ENCODE measurements at regions of chr22 and their contacts with region 1.

Region 1: DNA sequence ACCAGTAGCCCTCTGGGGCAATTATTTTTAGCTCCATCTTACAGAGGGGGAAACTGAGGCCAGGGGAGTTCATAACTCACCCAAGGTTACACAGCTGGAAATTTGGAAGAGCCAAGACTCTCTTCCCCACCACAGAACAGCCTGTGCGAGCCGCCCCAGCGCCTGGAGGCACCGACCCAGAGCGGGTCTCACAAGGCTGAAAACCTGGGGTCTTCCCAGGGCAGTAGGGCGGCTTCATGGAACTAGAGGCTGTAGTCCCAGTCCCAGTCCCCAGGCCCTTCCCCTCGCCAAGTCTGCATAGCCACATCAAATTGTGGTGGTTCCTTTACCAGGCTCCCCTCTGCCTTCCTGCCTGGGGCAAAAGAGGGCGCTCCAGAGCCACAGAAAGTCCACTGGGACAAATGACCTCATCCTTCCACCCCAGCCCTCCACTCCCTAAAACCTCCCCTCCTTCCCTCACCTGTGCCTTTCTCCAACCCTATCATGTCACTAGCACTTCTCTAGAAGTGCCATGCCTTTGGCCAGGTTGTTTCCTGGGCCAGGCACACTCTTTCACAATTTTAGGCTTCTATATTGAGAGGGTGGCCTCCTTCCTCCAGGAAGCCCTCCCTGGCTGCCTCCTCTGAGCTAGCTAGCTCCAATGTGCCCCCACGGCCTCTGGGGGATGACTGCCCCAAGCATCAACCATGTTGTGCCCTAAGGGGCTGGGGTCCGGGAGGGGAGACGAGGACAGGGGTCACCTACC is 15.2 kb upstream of the CDC42EP1 start:
- DNase-seq: peak; percentile 80
- H3K4me3 ChIP-seq: no peak overlapping the region
- H3K27ac ChIP-seq: peak overlapping the region; percentile 66
- H3K4me1 ChIP-seq: peaks cover 51% of the 10 kb centered on the region
- H3K27me3 ChIP-seq: no peaks in the 10 kb centered on the region
- CTCF ChIP-seq: peak; percentile 79 to 83

Region 2: DNA sequence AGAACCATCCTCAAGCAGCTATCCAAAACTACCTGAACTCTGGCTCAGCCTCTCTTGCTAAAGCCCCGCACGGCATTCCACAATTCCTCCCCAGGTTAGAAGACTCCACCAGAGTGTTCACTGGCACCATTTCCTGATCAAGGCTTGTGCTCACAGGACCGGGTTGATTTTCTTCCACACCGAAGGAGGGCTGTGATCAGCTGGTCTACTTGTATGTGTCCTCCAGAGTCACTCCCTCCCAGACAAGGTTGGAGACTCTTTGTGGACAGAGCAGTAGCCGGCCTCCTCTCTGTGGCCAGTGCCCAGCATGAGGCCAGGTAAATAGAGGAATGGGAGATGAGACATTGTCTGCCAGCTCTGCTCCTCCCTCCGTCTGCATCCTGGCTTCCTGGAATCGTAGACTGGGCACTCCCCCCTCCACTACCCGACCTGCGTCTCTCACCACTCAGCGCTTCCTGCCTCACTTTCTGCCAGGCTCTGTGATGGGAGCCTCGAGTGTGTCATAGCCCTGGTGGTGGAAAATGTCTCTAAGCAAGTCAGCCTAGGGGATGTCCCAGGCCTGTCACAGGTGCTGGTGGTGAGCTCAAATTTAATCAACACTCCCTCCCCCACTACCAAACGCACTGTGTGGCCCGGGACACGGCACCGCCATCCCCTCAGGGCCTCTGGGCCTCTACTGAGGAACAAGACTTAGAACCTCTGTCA is 423.1 kb before region 1 on chr22:
- CTCF ChIA-PET with region 1: no interaction called
- dilution Hi-C with region 1: no loop called
- in situ Hi-C with region 1: no loop called
- intact Hi-C with region 1: no loop called
- DNase-seq: peak; percentile 84
- H3K4me3 ChIP-seq: no peak overlapping the region
- H3K27ac ChIP-seq: peak overlapping the region; percentile 48
- H3K4me1 ChIP-seq: peaks cover 13% of the 10 kb centered on the region
- H3K27me3 ChIP-seq: no peaks in the 10 kb centered on the region
- CTCF ChIP-seq: peak in 1 of 2 donors; percentile 37

Region 3: DNA sequence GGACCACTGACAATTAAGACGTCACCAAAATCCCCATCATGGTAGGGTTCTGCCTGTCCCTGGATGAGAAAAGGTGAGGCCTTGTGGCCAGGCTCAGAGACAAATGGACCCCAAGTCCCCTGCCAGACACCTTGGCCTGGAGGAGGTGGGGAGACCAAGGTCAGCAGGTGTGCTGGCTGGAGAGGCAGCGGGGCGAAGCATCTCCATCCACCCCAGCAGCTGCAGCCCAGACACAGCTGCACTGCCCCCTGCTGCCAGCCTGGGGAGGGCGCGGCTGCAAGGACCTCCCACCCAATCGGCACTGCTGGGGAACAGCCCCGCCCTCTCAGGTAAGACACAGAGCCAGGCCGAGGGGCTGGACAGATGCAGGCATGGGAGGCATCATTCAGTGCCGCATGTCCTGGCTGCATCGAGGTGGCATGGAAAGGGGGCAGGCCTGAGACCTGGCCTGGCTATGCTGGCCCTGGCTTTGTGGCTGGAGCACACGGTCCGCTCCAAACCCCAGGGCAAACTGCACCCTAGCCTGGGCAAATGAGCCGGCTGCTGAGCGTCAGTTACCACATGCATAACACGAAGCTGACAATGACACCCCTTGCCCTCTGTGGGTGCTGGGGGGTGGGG is 46.7 kb before region 1 on chr22:
- CTCF ChIA-PET with region 1: no interaction called
- dilution Hi-C with region 1: loop called (anchors 5 kb)
- in situ Hi-C with region 1: no loop called
- intact Hi-C with region 1: no loop called
- DNase-seq: no peak
- H3K4me3 ChIP-seq: no peak overlapping the region
- H3K27ac ChIP-seq: no peak overlapping the region
- H3K4me1 ChIP-seq: peaks cover 58% of the 10 kb centered on the region
- H3K27me3 ChIP-seq: no peaks in the 10 kb centered on the region
- CTCF ChIP-seq: peak; percentile 21 to 35

Region 4: GRCh38 chr22:37533995-37534394 is 11.1 kb before region 1 on chr22:
- CTCF ChIA-PET with region 1: no interaction called
- dilution Hi-C with region 1: no loop called
- in situ Hi-C with region 1: no loop called
- intact Hi-C with region 1: no loop called
- DNase-seq: peak; percentile 98
- H3K4me3 ChIP-seq: no peak overlapping the region
- H3K27ac ChIP-seq: peak overlapping the region; percentile 80
- H3K4me1 ChIP-seq: peaks cover 20% of the 10 kb centered on the region
- H3K27me3 ChIP-seq: no peaks in the 10 kb centered on the region
- CTCF ChIP-seq: peak in 1 of 2 donors; percentile 9

Region 5: DNA sequence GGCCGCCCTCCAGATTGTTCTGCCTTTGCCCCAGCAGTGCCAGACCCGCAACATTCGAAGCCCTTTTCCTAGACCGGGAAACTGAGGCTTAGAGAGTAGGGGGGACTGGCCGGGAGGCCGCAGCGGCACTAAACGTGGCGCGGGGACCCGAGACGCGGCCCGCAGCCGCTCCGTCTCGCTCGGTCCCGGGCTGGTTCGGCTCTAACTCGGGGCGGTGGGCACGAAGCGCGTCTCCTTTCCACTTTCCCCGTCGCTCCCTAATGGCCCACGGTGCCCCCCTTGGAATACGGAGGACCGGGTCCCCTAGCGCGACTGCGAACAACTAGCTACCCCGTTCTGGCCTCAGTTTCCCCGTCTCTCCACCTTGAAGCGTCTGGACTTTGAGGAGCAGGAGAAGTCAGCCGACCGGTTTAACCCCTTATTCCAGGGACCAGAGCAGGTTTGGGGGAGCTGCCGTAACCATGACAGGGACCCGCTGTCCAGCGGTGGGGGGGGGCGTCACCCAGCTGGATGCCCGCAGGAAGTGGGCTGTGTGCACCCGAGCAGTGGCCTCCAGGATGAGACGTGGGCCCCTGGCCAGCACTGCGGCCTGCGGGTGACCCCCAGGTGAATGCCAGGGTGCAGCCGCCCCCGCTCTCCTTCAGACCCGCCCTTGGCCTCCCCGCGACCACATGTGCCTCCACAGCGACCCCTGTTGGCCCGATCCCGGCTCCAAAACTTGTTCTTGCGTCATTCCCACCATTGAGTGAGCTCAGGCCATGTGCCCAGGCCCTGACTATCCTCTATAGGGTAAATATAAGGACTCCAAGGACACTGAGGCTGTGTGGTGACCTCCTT is 16.3 kb after region 1 on chr22:
- CTCF ChIA-PET with region 1: interaction called, 5 read pairs
- dilution Hi-C with region 1: no loop called
- in situ Hi-C with region 1: no loop called
- intact Hi-C with region 1: loop called (anchors 1 kb)
- DNase-seq: peak; percentile 89
- H3K4me3 ChIP-seq: peak overlapping the region; percentile 71 to 91 (median 78)
- H3K27ac ChIP-seq: peak overlapping the region; percentile 90
- H3K4me1 ChIP-seq: peaks cover 46% of the 10 kb centered on the region
- H3K27me3 ChIP-seq: no peaks in the 10 kb centered on the region
- CTCF ChIP-seq: peak; percentile 79 to 88

Region 6: DNA sequence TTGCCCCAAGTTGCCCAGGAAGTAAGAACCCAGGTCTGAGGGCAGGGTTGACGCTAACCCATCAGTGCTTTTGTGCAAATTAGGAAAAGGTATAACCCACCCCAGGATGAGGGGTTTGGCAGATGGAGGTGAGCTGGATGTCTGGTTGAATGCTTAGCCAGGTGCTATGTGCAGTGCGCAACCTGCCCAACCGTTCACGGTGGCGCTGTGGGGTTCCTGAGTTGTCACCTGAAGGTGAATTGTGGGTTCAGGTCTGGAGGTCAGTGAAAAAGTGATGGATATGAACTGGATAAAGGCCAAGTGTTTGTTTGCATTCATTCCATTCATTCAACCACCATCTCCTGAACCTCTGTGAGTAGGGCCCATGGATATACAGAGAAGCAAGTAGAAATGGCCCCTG is 49.1 kb after region 1 on chr22:
- CTCF ChIA-PET with region 1: interaction called, 19 read pairs
- dilution Hi-C with region 1: no loop called
- in situ Hi-C with region 1: no loop called
- intact Hi-C with region 1: loop called (anchors 1 kb)
- DNase-seq: no peak
- H3K4me3 ChIP-seq: no peak overlapping the region
- H3K27ac ChIP-seq: no peak overlapping the region
- H3K4me1 ChIP-seq: no peaks in the 10 kb centered on the region
- H3K27me3 ChIP-seq: no peaks in the 10 kb centered on the region
- CTCF ChIP-seq: no peak

Region 7: DNA sequence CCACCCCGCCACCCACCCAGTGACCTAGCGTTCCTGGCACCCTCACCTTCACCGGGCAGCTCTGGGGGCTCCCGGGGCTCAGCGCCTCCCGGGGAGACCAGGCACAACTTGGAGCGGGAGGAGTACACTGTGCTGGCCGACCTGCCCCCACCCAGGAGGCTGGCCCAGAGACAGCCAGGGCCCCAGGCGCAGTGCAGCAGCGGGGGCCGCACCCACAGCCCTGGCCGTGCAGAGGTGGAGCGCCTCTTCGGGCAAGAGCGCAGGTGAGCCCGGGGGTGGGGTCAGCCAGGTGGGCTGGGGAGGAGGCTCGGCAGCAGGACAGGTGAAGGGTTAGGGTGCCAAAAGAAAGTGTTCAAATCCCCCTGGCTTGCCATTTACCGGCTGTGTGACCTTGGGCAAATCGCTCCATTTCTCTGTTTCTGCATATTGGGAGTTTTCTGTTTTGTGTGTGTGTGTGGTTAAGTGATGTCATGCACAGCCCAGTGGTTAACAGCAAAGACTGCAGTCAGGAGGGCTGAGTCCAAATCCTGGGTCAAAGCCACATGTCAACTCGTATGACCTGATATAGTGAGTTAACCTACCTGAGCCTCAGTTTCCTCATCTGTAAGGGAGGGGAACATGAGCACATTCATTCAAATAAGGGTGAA is 181.2 kb after region 1 on chr22:
- CTCF ChIA-PET with region 1: no interaction called
- dilution Hi-C with region 1: no loop called
- in situ Hi-C with region 1: no loop called
- intact Hi-C with region 1: no loop called
- DNase-seq: peak; percentile 19
- H3K4me3 ChIP-seq: no peak overlapping the region
- H3K27ac ChIP-seq: no peak overlapping the region
- H3K4me1 ChIP-seq: no peaks in the 10 kb centered on the region
- H3K27me3 ChIP-seq: no peaks in the 10 kb centered on the region
- CTCF ChIP-seq: peak in 1 of 2 donors; percentile 12

Region 8: GRCh38 chr22:37745548-37746365 is 200.6 kb after region 1 on chr22:
- CTCF ChIA-PET with region 1: no interaction called
- dilution Hi-C with region 1: loop called (anchors 5 kb)
- in situ Hi-C with region 1: no loop called
- intact Hi-C with region 1: no loop called
- DNase-seq: peak; percentile 85
- H3K4me3 ChIP-seq: peak overlapping the region; percentile 73 to 94 (median 75)
- H3K27ac ChIP-seq: peak overlapping the region; percentile 72
- H3K4me1 ChIP-seq: peaks cover 74% of the 10 kb centered on the region
- H3K27me3 ChIP-seq: no peaks in the 10 kb centered on the region
- CTCF ChIP-seq: no peak

Region 9: GRCh38 chr22:37777122-37777687 is 232.1 kb after region 1 on chr22:
- CTCF ChIA-PET with region 1: no interaction called
- dilution Hi-C with region 1: no loop called
- in situ Hi-C with region 1: no loop called
- intact Hi-C with region 1: loop called (anchors 5 kb)
- DNase-seq: peak; percentile 99
- H3K4me3 ChIP-seq: no peak overlapping the region
- H3K27ac ChIP-seq: peak overlapping the region; percentile 99
- H3K4me1 ChIP-seq: peaks cover 40% of the 10 kb centered on the region
- H3K27me3 ChIP-seq: no peaks in the 10 kb centered on the region
- CTCF ChIP-seq: no peak

Region 10: DNA sequence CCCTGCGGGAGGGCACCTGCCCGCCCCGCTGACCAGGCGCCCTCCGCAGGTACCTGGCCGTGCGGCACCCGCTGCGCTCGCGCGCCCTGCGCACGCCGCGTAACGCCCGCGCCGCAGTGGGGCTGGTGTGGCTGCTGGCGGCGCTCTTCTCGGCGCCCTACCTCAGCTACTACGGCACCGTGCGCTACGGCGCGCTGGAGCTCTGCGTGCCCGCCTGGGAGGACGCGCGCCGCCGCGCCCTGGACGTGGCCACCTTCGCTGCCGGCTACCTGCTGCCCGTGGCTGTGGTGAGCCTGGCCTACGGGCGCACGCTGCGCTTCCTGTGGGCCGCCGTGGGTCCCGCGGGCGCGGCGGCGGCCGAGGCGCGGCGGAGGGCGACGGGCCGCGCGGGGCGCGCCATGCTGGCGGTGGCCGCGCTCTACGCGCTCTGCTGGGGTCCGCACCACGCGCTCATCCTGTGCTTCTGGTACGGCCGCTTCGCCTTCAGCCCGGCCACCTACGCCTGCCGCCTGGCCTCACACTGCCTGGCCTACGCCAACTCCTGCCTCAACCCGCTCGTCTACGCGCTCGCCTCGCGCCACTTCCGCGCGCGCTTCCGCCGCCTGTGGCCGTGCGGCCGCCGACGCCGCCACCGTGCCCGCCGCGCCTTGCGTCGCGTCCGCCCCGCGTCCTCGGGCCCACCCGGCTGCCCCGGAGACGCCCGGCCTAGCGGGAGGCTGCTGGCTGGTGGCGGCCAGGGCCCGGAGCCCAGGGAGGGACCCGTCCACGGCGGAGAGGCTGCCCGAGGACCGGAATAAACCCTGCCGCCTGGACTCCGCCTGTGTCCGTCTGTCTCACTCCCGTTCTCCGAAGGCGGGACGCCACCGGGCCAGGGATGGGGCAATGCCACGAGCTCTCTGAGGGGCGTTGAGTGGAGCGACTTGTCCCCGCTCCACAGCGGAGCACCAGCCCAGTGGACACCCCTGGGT is 279.8 kb after region 1 on chr22:
- CTCF ChIA-PET with region 1: no interaction called
- dilution Hi-C with region 1: no loop called
- in situ Hi-C with region 1: no loop called
- intact Hi-C with region 1: no loop called
- DNase-seq: peak; percentile 25
- H3K4me3 ChIP-seq: peak overlapping the region in 1 of 3 experiments; percentile 18
- H3K27ac ChIP-seq: no peak overlapping the region
- H3K4me1 ChIP-seq: peaks cover 6% of the 10 kb centered on the region
- H3K27me3 ChIP-seq: peaks cover 2% of the 10 kb centered on the region
- CTCF ChIP-seq: no peak